CD8-positive, alpha-beta T cell (primary cell): ENCODE measurements at regions of chr6 and their contacts with region 1.

Region 1: GRCh38 chr6:41941280-41942066 is at the start of gene CCND3:
- DNase-seq: peak; percentile 53 to 92 (median 82)
- ATAC-seq: peak; percentile 63
- H3K4me3 ChIP-seq: peak within 1 kb of the TSS; percentile 51 to 97
- H3K4me3 Mint-ChIP-seq: peak within 1 kb of the TSS; percentile 84
- H3K27ac ChIP-seq: peak within 1 kb of the TSS; percentile 50 to 63
- H3K27ac Mint-ChIP-seq: peak within 1 kb of the TSS; percentile 89
- H3K4me1 ChIP-seq: peaks cover 64% of the 10 kb centered on the region
- H3K4me1 Mint-ChIP-seq: peaks cover 65% of the 10 kb centered on the region
- H3K27me3 ChIP-seq: no peaks in the 10 kb centered on the region
- H3K27me3 Mint-ChIP-seq: no peaks in the 10 kb centered on the region
- CTCF ChIP-seq: no peak
- total RNA-seq, gene CCND3: 129 to 135 TPM

Region 2: GRCh38 chr6:41895300-41896233 is 45.9 kb before region 1 on chr6 and contains the start of gene USP49:
- CTCF ChIA-PET with region 1: interaction called, 3 read pairs
- POLR2A ChIA-PET with region 1: no interaction called
- intact Hi-C with region 1: loop called (anchors 2 kb)
- DNase-seq: peak; percentile 80 to 94 (median 91)
- ATAC-seq: peak; percentile 95
- H3K4me3 ChIP-seq: peak within 1 kb of the TSS; percentile 78 to 90
- H3K4me3 Mint-ChIP-seq: no peak within 1 kb of the TSS
- H3K27ac ChIP-seq: peak within 1 kb of the TSS; percentile 55 to 77
- H3K27ac Mint-ChIP-seq: peak within 1 kb of the TSS; percentile 89
- H3K4me1 ChIP-seq: peaks cover 24% of the 10 kb centered on the region
- H3K4me1 Mint-ChIP-seq: peaks cover 10% of the 10 kb centered on the region
- H3K27me3 ChIP-seq: no peaks in the 10 kb centered on the region
- H3K27me3 Mint-ChIP-seq: no peaks in the 10 kb centered on the region
- CTCF ChIP-seq: no peak
- total RNA-seq, gene USP49: 1.6 to 1.8 TPM

Region 3: GRCh38 chr6:41920921-41921711 is 20.4 kb before region 1 on chr6 and contains the starts of genes BYSL and MED20:
- CTCF ChIA-PET with region 1: interaction called, 29 read pairs
- POLR2A ChIA-PET with region 1: interaction called, 13 read pairs
- intact Hi-C with region 1: loop called (anchors 1 kb)
- DNase-seq: peak; percentile 86 to 98 (median 94)
- ATAC-seq: peak; percentile 92
- H3K4me3 ChIP-seq: peak within 1 kb of the TSS; percentile 96 to 97
- H3K4me3 Mint-ChIP-seq: peak within 1 kb of the TSS; percentile 100
- H3K27ac ChIP-seq: peak within 1 kb of the TSS; percentile 83 to 99
- H3K27ac Mint-ChIP-seq: peak within 1 kb of the TSS; percentile 100
- H3K4me1 ChIP-seq: peaks cover 32% of the 10 kb centered on the region
- H3K4me1 Mint-ChIP-seq: peaks cover 53% of the 10 kb centered on the region
- H3K27me3 ChIP-seq: no peaks in the 10 kb centered on the region
- H3K27me3 Mint-ChIP-seq: no peaks in the 10 kb centered on the region
- CTCF ChIP-seq: peak; percentile 97
- total RNA-seq, gene BYSL: 3.2 to 6.2 TPM
- total RNA-seq, gene MED20: 1.8 TPM

Region 4: GRCh38 chr6:41958022-41958856 is 16.8 kb after region 1 on chr6:
- CTCF ChIA-PET with region 1: interaction called, 4 read pairs
- POLR2A ChIA-PET with region 1: interaction called, 5 read pairs
- intact Hi-C with region 1: loop called in 1 of 2 experiments (anchors 2 kb)
- DNase-seq: no peak
- ATAC-seq: no peak
- H3K4me3 ChIP-seq: no peak overlapping the region
- H3K4me3 Mint-ChIP-seq: no peak overlapping the region
- H3K27ac ChIP-seq: no peak overlapping the region
- H3K27ac Mint-ChIP-seq: peak overlapping the region; percentile 89
- H3K4me1 ChIP-seq: peaks cover 40% of the 10 kb centered on the region
- H3K4me1 Mint-ChIP-seq: peaks cover 67% of the 10 kb centered on the region
- H3K27me3 ChIP-seq: no peaks in the 10 kb centered on the region
- H3K27me3 Mint-ChIP-seq: no peaks in the 10 kb centered on the region
- CTCF ChIP-seq: no peak

Region 5: GRCh38 chr6:42017021-42017643 is 75.7 kb after region 1 on chr6:
- CTCF ChIA-PET with region 1: interaction called, 3 read pairs
- POLR2A ChIA-PET with region 1: interaction called, 3 read pairs
- intact Hi-C with region 1: loop called (anchors 5 kb)
- DNase-seq: peak in 1 of 9 experiments; percentile 31
- ATAC-seq: peak; percentile 16
- H3K4me3 ChIP-seq: no peak overlapping the region
- H3K4me3 Mint-ChIP-seq: peak overlapping the region; percentile 19
- H3K27ac ChIP-seq: peak overlapping the region in 1 of 2 experiments; percentile 40
- H3K27ac Mint-ChIP-seq: peak overlapping the region; percentile 78
- H3K4me1 ChIP-seq: peaks cover 57% of the 10 kb centered on the region
- H3K4me1 Mint-ChIP-seq: peaks cover 68% of the 10 kb centered on the region
- H3K27me3 ChIP-seq: no peaks in the 10 kb centered on the region
- H3K27me3 Mint-ChIP-seq: no peaks in the 10 kb centered on the region
- CTCF ChIP-seq: no peak

Region 6: DNA sequence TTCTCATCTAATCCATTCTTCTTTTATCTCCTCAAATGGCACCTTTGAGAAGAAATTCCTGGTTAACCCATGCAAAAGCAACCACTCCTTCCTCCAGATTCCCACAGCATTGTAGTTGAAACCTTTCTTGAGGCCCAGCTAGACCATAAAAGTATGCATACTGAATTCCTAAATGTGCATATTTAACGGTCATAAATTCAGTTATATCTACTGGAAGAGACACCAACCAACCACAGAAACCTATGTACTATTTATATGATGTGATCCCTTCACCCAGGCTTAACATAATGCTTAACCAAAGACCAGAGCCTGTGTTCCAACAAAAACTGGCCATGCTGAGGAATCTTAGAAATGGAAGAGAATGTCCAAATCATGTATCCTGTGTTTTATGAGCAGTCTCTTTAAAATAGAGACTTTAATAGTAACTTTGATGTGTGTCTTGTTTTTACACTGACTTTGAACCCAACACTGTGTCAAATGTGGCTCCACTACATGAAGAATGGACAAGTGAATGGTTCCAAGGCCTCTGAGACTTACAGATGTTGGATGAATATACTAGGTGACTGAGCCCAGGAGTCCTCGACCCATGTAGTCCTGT is 97.4 kb after region 1 on chr6:
- CTCF ChIA-PET with region 1: interaction called, 184 read pairs
- POLR2A ChIA-PET with region 1: interaction called, 58 read pairs
- intact Hi-C with region 1: loop called (anchors 1 kb)
- DNase-seq: no peak
- ATAC-seq: no peak
- H3K4me3 ChIP-seq: peak overlapping the region; percentile 34 to 52
- H3K4me3 Mint-ChIP-seq: peak overlapping the region; percentile 79
- H3K27ac ChIP-seq: peak overlapping the region; percentile 32 to 57
- H3K27ac Mint-ChIP-seq: peak overlapping the region; percentile 95
- H3K4me1 ChIP-seq: peaks cover 80% of the 10 kb centered on the region
- H3K4me1 Mint-ChIP-seq: peaks cover 75% of the 10 kb centered on the region
- H3K27me3 ChIP-seq: no peaks in the 10 kb centered on the region
- H3K27me3 Mint-ChIP-seq: no peaks in the 10 kb centered on the region
- CTCF ChIP-seq: no peak

Region 7: DNA sequence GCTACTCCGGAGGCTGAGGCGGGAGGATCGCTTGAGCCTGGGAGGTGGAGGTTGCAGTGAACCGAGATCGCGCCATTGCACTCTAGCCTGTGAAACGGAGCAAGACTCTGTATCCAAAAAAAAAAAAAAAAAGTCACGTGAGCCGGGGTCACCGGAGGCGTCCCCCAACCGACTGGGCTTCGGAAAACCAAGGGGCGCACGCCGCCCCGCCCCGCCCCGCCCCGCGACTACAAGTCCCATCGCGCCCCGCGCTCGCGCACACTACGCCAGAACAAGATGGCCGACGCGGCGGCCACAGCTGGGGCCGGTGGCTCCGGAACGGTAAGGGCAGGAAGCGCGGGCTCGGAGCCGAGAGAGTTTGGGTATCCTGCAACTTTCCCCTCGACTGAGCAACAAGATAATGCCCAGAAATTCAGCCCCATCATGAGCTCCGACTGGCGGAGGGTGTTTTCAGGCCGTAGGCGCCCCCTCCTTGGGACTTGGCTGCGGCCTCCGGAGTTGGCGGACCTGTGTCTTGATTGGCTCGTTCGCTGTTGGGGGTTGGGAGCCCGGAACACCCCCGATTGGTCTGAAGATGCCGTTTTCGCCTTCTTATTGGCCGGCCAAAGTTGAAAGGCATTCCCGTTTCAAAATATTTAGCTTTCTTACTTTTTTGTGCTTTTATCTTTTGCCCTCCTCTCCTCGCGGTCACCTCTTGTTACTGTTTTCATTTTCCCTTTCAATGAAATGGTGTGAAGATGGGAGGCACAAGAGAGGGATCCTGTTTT is 109.0 kb after region 1 on chr6 and contains the start of gene TAF8:
- CTCF ChIA-PET with region 1: interaction called, 184 read pairs
- POLR2A ChIA-PET with region 1: interaction called, 58 read pairs
- intact Hi-C with region 1: no loop called
- DNase-seq: peak; percentile 72 to 94 (median 89)
- ATAC-seq: peak; percentile 57
- H3K4me3 ChIP-seq: peak within 1 kb of the TSS; percentile 98 to 99
- H3K4me3 Mint-ChIP-seq: peak within 1 kb of the TSS; percentile 95
- H3K27ac ChIP-seq: peak within 1 kb of the TSS; percentile 80 to 89
- H3K27ac Mint-ChIP-seq: peak within 1 kb of the TSS; percentile 97
- H3K4me1 ChIP-seq: peaks cover 39% of the 10 kb centered on the region
- H3K4me1 Mint-ChIP-seq: peaks cover 66% of the 10 kb centered on the region
- H3K27me3 ChIP-seq: no peaks in the 10 kb centered on the region
- H3K27me3 Mint-ChIP-seq: no peaks in the 10 kb centered on the region
- CTCF ChIP-seq: no peak
- total RNA-seq, gene TAF8: 24.6 to 33.3 TPM

Region 8: GRCh38 chr6:42148058-42148457 is 206.6 kb after region 1 on chr6:
- CTCF ChIA-PET with region 1: no interaction called
- POLR2A ChIA-PET with region 1: no interaction called
- intact Hi-C with region 1: no loop called
- DNase-seq: no peak
- ATAC-seq: no peak
- H3K4me3 ChIP-seq: no peak overlapping the region
- H3K4me3 Mint-ChIP-seq: no peak overlapping the region
- H3K27ac ChIP-seq: no peak overlapping the region
- H3K27ac Mint-ChIP-seq: no peak overlapping the region
- H3K4me1 ChIP-seq: no peaks in the 10 kb centered on the region
- H3K4me1 Mint-ChIP-seq: no peaks in the 10 kb centered on the region
- H3K27me3 ChIP-seq: peaks cover 0 to 5% of the 10 kb centered on the region in 2 experiments
- H3K27me3 Mint-ChIP-seq: peaks cover 11% of the 10 kb centered on the region
- CTCF ChIP-seq: no peak